Posterior cingulate gyrus (tissue), 11 donors: ENCODE measurements at regions of chr4 and their contacts with region 1.

Region 1: DNA sequence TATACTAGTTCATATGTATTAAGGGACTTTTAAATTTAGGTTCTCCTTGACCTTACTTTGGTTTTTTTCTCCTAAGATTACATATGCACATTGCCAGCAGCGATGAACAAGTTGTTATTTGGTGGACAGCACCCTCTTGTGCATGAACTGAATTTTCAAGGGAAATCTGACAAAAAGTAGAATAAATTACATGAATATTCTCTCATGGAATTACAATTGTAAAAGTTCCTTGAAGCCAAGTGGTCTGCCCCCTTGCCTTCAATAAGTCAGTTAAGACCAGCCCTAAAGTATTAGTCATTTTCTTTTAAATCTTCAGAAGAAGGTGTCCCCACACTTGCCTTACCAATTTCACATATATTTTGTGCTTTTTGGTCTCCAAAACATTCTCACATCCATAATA is 30.7 kb upstream of the SMARCA5 start:
- DNase-seq: peak in 2 of 10 donors; percentile 21 to 52

Region 2: DNA sequence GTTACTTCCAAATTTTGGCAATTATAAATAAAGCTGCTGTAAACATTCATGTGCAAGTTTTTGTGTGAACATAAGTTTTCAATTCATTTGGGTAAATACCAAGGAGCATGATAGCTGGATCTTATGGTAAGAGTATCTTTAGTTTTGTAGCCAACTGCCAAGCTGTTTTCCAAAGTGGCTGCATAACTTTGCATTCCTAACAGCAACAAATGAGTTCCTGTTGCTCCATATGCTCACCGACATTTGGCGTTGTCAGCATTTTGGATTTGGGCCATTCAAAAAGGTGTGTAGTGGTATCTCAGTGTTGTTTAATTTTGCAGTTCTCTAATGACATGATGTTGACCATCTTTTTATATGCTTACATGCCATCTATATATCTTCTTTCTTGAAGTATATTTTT is 845.2 kb before region 1 on chr4:
- intact Hi-C with region 1: no loop called
- DNase-seq: peak in 1 of 10 donors; percentile 2

Region 3: DNA sequence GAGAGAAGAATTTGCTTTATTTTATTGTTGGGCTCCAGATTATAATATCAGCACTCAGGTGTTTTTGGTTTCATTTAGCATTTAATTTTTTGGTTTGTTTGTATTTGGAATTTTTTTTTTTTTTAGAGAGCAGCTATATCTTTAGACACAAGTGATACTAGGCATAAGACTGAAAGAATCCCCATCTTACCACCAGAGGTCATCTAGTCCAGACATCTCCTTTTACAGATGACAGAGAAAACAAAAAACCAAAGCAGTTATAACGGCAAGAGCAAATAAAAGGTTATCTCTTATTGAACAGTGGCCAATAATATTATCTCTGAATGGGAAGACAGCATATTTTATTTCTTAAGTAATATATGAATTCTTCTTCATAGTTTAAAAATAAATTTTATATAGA is 275.3 kb before region 1 on chr4:
- intact Hi-C with region 1: loop called (anchors 2 kb)
- DNase-seq: no peak

Region 4: GRCh38 chr4:143375313-143376073 is 107.3 kb before region 1 on chr4:
- intact Hi-C with region 1: loop called (anchors 1 kb)
- DNase-seq: peak; percentile 46 to 94 (median 66)